Adrenal gland (tissue), 19 donors: ENCODE measurements at regions of chr20 and their contacts with region 1.

Region 1: DNA sequence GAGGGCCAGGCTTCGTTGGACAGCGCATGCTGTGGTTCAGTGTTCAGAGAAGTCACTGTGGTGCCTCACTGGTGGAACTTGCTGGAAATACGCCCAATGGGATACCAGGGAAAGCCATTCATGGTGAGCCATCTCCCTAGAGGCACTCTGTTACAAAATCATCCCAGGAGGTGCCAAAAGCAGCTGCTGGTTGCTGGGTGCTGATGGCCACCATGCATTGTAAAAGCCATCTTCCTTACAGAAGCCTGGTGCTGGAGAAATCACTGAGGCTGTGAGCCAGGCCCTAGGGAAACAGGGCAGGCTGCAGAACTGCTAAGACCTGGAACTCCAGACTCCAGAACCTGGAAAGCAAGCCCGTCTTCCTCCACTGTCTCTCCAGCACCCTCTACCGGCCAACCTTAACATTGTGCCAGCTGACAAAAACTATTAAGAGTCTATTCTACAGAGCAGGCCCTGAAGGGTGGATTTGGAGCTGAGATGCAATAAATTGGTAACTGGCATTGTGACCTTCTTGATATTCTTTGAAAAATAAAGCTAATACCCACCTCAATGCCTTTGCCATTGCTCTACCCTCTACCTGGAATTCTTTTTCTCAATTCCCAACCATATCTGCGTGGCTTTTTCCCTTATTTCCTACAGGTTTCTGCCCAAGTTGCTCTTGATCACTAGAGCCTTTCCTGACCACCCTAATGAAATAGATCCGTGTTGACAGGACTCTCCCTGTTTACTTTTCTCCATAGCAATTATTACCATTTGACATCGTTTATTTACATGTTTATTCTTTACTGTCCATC is 18.5 kb downstream of the SNRPB start:
- DNase-seq: peak; percentile 73 to 90 (median 81)
- H3K4me3 ChIP-seq: no peak overlapping the region
- H3K27ac ChIP-seq: no peak overlapping the region
- H3K4me1 ChIP-seq: no peaks in the 10 kb centered on the region
- H3K27me3 ChIP-seq: no peaks in the 10 kb centered on the region
- CTCF ChIP-seq: peak; percentile 67 to 91 (median 77)
- POLR2A ChIP-seq: no peak

Region 2: DNA sequence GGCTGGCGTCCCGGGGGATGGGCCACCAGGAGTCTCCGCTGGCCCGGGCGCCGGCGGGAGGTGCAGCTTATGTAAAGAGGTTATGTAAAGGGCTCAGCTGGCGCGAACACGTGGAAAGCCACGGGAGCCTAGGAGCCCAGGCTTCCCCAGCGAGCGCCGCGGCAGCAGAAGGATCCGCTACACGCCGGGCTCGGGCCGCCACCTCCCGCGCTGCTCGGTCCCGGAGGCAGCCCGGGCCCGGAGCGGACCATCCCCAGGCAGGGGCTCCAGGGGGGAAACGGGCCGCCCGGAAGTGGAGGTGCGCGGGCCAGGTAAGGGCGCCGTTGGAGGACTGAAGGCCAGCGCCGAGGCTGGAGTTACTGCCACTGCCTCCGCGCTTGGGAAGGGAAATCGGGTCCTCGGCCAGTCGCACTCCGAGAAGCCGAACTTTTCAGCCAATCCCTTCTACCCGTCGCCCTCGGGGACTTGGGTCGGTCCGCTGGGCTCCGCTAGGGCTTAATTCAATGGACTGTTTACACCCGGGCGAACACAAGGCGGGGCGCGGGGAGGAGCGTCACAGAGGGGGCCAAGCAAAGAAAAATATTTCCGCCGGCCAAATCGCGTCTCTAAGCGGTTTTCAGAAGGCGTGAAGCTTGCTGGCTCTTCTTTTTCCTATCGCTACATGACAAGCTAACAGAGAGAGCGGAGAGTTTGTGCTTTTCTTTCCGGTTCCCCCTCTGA is 350.1 kb before region 1 on chr20:
- intact Hi-C with region 1: loop called in 1 of 2 experiments (anchors 10 kb)
- DNase-seq: peak; percentile 91 to 96 (median 93)
- H3K4me3 ChIP-seq: peak overlapping the region; percentile 70 to 96 (median 80)
- H3K27ac ChIP-seq: peak overlapping the region; percentile 96 to 99 (median 99)
- H3K4me1 ChIP-seq: peaks cover 29 to 47% of the 10 kb centered on the region in 2 donors
- H3K27me3 ChIP-seq: no peaks in the 10 kb centered on the region
- CTCF ChIP-seq: peak in 4 of 6 experiments; percentile 7 to 50 (median 27)
- POLR2A ChIP-seq: peak; percentile 55 to 80

Region 3: GRCh38 chr20:2195614-2196013 is 256.5 kb before region 1 on chr20:
- intact Hi-C with region 1: loop called (anchors 5 to 10 kb)
- DNase-seq: no peak
- H3K4me3 ChIP-seq: no peak overlapping the region
- H3K27ac ChIP-seq: no peak overlapping the region
- H3K4me1 ChIP-seq: no peaks in the 10 kb centered on the region
- H3K27me3 ChIP-seq: no peaks in the 10 kb centered on the region
- CTCF ChIP-seq: no peak
- POLR2A ChIP-seq: no peak

Region 4: DNA sequence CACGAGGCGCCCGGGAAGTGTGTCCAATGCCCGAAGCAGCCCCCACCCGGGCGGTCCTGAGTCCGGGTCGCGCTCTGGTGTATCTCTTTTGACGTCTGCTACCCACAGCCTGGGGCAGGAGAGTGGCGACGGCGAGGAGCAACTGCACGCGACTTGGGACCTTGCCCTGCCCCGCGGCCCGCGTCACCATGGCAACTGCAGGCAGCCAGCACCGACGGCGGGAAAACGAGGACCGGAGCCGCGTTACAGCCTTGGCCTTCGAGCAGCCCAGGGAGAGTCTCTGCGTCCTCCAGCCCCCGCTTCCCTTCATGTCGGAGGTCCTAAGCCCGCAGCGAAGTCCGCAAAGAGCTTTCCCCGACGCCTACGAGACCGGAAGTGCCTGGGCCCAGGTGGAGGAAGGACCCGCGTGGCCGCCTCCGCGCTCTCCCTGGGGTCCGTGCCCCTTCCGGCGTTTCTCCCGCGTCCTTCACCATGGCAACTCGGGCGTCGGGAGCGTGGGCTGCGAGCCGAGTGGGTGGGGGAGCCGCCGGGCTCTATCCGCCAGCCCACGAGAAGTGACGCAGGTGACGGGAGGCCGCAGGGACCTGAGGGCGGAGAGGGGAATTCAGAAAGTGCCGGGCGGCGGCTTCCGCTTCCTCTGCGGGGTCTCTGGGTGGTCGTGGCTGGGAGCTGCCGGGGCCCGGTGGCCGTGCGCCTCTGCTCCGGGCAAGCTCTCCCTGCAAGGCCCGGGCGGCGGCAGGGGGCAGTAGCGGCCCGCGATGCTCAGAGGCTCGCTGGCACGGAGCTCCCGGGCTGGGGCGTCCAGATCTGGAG is 245.0 kb before region 1 on chr20:
- intact Hi-C with region 1: loop called in 1 of 2 experiments (anchors 10 kb)
- DNase-seq: peak; percentile 64 to 86 (median 80)
- H3K4me3 ChIP-seq: peak overlapping the region in 2 of 4 donors; percentile 50 to 82
- H3K27ac ChIP-seq: no peak overlapping the region
- H3K4me1 ChIP-seq: peaks cover 0 to 6% of the 10 kb centered on the region in 2 donors
- H3K27me3 ChIP-seq: no peaks in the 10 kb centered on the region
- CTCF ChIP-seq: peak; percentile 54 to 82 (median 70)
- POLR2A ChIP-seq: no peak

Region 5: DNA sequence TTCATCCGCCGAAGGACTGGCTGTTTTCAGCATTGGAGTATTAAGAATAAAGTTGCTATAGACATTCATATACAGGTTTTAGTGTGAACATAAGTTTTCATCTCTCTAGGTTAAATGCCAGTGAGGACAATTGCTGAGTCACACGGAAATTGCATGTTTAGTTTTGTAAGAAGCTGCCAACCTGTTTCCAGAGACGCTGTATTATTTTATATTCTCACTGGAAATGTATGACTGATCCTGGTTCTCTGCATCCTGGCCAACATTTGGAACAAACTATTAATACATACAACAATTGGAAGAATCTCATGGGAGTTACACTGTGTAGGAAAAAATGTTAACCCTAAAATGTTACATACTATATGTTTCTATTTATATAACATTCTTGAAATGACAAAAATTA is 88.1 kb before region 1 on chr20:
- intact Hi-C with region 1: no loop called
- DNase-seq: no peak
- H3K4me3 ChIP-seq: no peak overlapping the region
- H3K27ac ChIP-seq: no peak overlapping the region
- H3K4me1 ChIP-seq: no peaks in the 10 kb centered on the region
- H3K27me3 ChIP-seq: no peaks in the 10 kb centered on the region
- CTCF ChIP-seq: no peak
- POLR2A ChIP-seq: no peak